ENCODE measurements at regions of chr2 and their contacts with region 1.

Region 1: GRCh38 chr2:70142590-70143313 is 48.1 kb downstream of the C2orf42 start:
- DNase-seq: peak; percentile 99 to 100
- H3K4me3 ChIP-seq: peak overlapping the region; percentile 52 to 74 (median 69)
- H3K27ac ChIP-seq: peak overlapping the region; percentile 99 to 100
- H3K4me1 ChIP-seq: peaks cover 5 to 10% of the 10 kb centered on the region in 2 donors
- H3K27me3 ChIP-seq: no peaks in the 10 kb centered on the region
- CTCF ChIP-seq: peak; percentile 99 to 100 (median 100)
- POLR2A ChIP-seq: peak; percentile 89

Region 2: DNA sequence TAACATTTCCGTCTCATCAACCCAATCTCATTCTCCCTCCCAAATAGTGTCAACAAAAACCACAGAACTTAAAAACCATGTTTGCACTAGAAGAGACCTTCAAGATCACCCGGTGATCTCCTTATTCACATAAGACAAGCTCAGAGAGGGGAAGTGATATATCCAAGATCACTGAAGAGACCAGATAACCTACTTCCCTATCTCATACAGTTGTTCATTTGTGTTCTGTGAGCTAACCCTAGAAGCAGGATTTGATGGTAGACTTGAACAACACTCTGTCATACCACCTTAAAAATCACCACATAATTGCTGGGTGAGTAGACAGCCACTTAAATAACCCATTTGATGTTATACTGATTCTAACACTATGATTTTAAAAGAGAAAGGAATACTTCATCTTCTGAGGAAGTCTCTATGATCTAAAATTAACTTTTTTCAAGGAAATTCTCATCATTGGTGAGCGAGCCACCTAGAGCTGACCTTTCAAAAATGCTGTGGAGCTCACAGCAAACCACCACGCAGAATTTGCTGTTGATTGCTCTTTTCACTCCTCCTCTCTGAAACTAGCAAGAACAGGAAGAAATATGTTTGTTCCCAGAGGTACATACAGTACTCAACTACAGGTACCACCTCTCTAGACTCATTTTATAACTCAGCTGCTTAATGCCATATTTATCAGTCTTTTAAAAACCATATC is 514.3 kb before region 1 on chr2:
- intact Hi-C with region 1: no loop called
- DNase-seq: no peak
- H3K4me3 ChIP-seq: no peak overlapping the region
- H3K27ac ChIP-seq: no peak overlapping the region
- H3K4me1 ChIP-seq: no peaks in the 10 kb centered on the region
- H3K27me3 ChIP-seq: no peaks in the 10 kb centered on the region
- CTCF ChIP-seq: no peak
- POLR2A ChIP-seq: no peak

Region 3: GRCh38 chr2:69914170-69914960 is 228.4 kb before region 1 on chr2:
- intact Hi-C with region 1: loop called (anchors 1 kb)
- DNase-seq: peak; percentile 100
- H3K4me3 ChIP-seq: peak overlapping the region; percentile 86 to 91 (median 87)
- H3K27ac ChIP-seq: peak overlapping the region; percentile 97
- H3K4me1 ChIP-seq: no peaks in the 10 kb centered on the region
- H3K27me3 ChIP-seq: no peaks in the 10 kb centered on the region
- CTCF ChIP-seq: peak in 2 of 3 donors; percentile 14 to 16
- POLR2A ChIP-seq: peak; percentile 85

Region 4: GRCh38 chr2:70086838-70087701 is 55.7 kb before region 1 on chr2 and contains the start of gene PCBP1:
- intact Hi-C with region 1: loop called (anchors 1 kb)
- DNase-seq: peak; percentile 92 to 96
- H3K4me3 ChIP-seq: peak within 1 kb of the TSS; percentile 77 to 90 (median 87)
- H3K27ac ChIP-seq: peak within 1 kb of the TSS; percentile 100
- H3K4me1 ChIP-seq: peaks cover 0 to 15% of the 10 kb centered on the region in 2 donors
- H3K27me3 ChIP-seq: no peaks in the 10 kb centered on the region
- CTCF ChIP-seq: no peak
- POLR2A ChIP-seq: peak; percentile 62
- total RNA-seq, gene PCBP1: 121 to 210 (median 145) TPM

Region 5: DNA sequence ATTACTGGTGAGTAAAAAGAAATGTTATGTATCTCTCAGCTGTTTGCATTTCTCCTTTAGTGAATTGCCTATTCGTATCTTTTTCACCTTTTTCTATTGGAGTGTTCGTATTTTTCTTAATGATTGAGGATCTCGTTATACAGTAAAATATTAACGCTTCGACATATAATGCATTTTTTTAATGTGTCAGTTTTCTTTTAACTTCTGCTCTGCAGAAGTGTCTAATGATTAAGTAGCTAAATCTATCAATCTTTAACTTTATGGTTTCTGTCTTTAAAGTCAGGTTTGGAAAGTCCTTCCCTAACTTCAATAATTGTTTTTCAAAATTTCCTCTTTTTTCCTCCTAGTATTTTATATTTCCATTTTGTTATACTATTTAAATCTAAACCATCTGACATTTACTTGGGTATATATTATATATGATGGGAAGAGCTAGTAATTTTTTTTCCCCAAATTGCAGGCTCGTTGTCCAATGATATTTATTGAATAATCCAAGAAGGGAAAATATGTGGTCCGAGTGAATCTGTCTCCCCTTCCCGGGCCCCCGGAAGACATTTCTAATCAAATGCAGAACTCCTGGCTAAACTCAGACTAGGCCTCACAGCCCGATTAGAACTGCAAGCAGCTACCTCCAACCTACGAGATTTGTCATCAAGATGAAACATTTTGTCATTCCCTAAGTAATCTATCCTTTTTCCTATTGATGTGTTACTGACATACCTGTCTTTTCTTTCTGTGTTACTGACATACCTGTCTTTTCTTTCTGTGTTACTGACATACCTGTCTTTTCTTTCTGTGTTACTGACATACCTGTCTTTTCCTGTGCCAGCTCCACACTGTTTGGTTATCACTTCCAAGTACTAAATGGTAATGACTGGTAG is 38.3 kb before region 1 on chr2:
- intact Hi-C with region 1: no loop called
- DNase-seq: no peak
- H3K4me3 ChIP-seq: no peak overlapping the region
- H3K27ac ChIP-seq: peak overlapping the region; percentile 6 to 22
- H3K4me1 ChIP-seq: peaks cover 0 to 4% of the 10 kb centered on the region in 2 donors
- H3K27me3 ChIP-seq: no peaks in the 10 kb centered on the region
- CTCF ChIP-seq: no peak
- POLR2A ChIP-seq: no peak

Region 6: GRCh38 chr2:70173520-70173919 is 30.8 kb after region 1 on chr2:
- intact Hi-C with region 1: no loop called
- DNase-seq: no peak
- H3K4me3 ChIP-seq: no peak overlapping the region
- H3K27ac ChIP-seq: no peak overlapping the region
- H3K4me1 ChIP-seq: no peaks in the 10 kb centered on the region
- H3K27me3 ChIP-seq: no peaks in the 10 kb centered on the region
- CTCF ChIP-seq: no peak
- POLR2A ChIP-seq: no peak

Region 7: GRCh38 chr2:70703900-70704549 is 561.3 kb after region 1 on chr2:
- intact Hi-C with region 1: no loop called
- DNase-seq: no peak
- H3K4me3 ChIP-seq: no peak overlapping the region
- H3K27ac ChIP-seq: no peak overlapping the region
- H3K4me1 ChIP-seq: no peaks in the 10 kb centered on the region
- H3K27me3 ChIP-seq: no peaks in the 10 kb centered on the region
- CTCF ChIP-seq: no peak
- POLR2A ChIP-seq: no peak

Region 8: GRCh38 chr2:71327916-71328315 is 1185.2 kb after region 1 on chr2:
- intact Hi-C with region 1: loop called (anchors 5 kb)
- DNase-seq: no peak
- H3K4me3 ChIP-seq: no peak overlapping the region
- H3K27ac ChIP-seq: no peak overlapping the region
- H3K4me1 ChIP-seq: no peaks in the 10 kb centered on the region
- H3K27me3 ChIP-seq: no peaks in the 10 kb centered on the region
- CTCF ChIP-seq: no peak
- POLR2A ChIP-seq: no peak

Measured in breast epithelium (tissue), 4 donors.